ENCODE measurements at regions of chr20 and their contacts with region 1.

Region 1: DNA sequence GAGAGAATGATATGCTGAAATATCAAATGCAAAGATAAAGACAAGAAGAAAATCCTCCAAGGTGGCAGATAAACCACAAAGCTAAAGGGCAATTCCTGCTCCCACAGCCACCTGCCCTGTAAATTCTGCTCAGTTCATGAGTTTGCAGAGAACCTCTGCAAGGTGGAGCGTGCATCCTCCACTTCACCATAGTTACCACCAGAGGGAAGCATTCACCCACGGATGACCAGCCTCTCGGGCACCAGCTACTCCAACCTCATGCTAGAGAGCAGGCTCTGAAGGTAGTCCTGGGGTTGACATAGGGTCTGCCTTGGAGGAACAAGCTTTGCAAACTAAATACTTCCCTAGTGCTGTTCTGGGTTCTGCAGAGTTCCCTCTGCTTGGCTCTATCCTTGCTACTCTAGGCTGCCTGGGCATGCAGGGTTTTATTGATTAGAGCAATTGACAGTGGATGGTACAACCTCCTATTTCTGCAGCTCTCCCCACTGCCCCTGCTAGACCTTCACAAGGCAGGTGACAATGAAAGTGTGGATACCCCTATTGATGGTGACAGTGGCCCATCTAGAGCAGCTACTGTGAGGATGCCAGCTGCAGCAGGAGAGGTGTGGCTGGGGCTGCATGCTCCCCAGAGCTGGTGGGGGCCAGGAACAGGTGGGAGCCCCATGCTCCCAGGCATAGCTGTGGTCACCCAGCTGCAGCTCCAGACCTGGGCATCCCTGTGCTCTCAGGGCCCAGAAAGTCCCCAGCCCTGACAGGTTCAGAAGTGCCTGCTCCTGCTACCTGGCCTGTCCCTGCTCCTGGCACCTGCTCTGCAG is 51.1 kb downstream of the GGTLC1 start:
- DNase-seq: peak; percentile 45 to 78 (median 71)
- H3K4me3 ChIP-seq: no peak overlapping the region
- H3K27ac ChIP-seq: no peak overlapping the region
- H3K4me1 ChIP-seq: no peaks in the 10 kb centered on the region
- H3K27me3 ChIP-seq: no peaks in the 10 kb centered on the region

Region 2: GRCh38 chr20:23954008-23954745 is 16.7 kb after region 1 on chr20:
- CTCF ChIA-PET with region 1: interaction called, 24 read pairs
- POLR2A ChIA-PET with region 1: no interaction called
- DNase-seq: no peak
- H3K4me3 ChIP-seq: no peak overlapping the region
- H3K27ac ChIP-seq: no peak overlapping the region
- H3K4me1 ChIP-seq: peaks cover 0 to 4% (median 0%) of the 10 kb centered on the region in 4 experiments
- H3K27me3 ChIP-seq: no peaks in the 10 kb centered on the region

Region 3: DNA sequence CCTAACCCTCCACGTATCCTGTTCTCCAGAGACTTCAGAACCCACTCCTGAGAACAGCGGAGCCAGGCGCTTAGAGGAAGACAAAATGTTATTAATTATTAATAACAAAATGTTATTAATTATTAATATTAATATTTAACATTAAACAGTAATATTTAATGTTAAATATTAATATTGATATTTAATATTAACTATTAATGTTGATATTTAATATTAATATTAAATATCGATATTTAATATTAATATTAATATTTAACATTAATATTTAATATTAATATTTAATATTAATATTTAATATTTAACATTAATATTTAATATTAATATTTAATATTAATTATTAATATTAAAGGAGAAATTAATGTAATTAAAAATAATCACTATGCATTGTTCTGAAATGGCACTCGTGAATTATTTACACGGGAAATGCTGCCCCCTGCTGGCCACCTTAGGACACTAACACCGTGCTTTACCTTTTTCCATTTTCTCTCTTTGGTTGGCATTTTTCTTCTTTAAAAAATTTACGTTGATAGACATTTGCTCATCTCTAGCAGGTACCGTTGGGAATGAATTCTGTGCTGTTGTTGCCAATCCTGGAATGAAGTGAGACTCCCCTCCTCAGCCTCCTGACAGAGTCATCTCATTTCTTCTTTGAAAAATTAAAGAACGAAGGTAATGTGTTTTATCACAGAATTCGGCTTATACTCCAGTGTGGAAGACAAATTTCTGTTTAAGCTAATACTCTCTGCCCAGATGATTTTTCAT is 58.6 kb after region 1 on chr20:
- CTCF ChIA-PET with region 1: interaction called, 16 read pairs
- POLR2A ChIA-PET with region 1: no interaction called
- DNase-seq: peak; percentile 42 to 59 (median 54)
- H3K4me3 ChIP-seq: no peak overlapping the region
- H3K27ac ChIP-seq: no peak overlapping the region
- H3K4me1 ChIP-seq: no peaks in the 10 kb centered on the region
- H3K27me3 ChIP-seq: no peaks in the 10 kb centered on the region

Region 4: DNA sequence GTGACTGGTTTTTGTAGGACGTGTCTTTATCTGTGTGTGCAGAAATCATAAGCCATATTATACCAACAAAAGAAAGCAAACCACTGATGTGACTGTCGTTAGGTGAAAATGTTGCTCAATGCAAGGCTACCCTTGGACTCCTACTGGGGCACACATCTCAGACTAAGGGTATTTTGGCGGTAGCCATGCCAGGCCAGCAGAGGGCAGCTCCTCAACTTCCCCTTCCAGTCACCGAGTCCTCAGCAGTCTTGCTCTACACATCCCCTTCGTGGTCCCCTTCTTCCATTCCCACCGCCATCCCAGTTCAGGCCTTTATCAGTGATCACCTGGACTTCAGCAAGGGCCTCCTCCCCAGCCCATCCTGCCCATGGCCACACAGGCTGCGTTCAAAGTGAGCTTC is 164.8 kb after region 1 on chr20:
- CTCF ChIA-PET with region 1: interaction called, 13 read pairs
- POLR2A ChIA-PET with region 1: no interaction called
- DNase-seq: peak; percentile 30 to 62 (median 61)
- H3K4me3 ChIP-seq: no peak overlapping the region
- H3K27ac ChIP-seq: no peak overlapping the region
- H3K4me1 ChIP-seq: peaks cover 0 to 2% (median 0%) of the 10 kb centered on the region in 4 experiments
- H3K27me3 ChIP-seq: no peaks in the 10 kb centered on the region

Measured in common myeloid progenitor, CD34-positive (primary cell).